Activated T-helper 1 cell treated with anti-CD3 and anti-CD28 coated beads, Interleukin-12 subunit alpha, Interleukin-12 subunit beta, Interleukin-2, Interleukin-4 antibody, amounts not matched to agents 30 ng/mL and 10 ng/mL and 1 ng/mL, durations not matched to agents 14 hours and 24 hours and 36 hours (primary cell): ENCODE measurements at regions of chr1 and their contacts with region 1.

Region 1: DNA sequence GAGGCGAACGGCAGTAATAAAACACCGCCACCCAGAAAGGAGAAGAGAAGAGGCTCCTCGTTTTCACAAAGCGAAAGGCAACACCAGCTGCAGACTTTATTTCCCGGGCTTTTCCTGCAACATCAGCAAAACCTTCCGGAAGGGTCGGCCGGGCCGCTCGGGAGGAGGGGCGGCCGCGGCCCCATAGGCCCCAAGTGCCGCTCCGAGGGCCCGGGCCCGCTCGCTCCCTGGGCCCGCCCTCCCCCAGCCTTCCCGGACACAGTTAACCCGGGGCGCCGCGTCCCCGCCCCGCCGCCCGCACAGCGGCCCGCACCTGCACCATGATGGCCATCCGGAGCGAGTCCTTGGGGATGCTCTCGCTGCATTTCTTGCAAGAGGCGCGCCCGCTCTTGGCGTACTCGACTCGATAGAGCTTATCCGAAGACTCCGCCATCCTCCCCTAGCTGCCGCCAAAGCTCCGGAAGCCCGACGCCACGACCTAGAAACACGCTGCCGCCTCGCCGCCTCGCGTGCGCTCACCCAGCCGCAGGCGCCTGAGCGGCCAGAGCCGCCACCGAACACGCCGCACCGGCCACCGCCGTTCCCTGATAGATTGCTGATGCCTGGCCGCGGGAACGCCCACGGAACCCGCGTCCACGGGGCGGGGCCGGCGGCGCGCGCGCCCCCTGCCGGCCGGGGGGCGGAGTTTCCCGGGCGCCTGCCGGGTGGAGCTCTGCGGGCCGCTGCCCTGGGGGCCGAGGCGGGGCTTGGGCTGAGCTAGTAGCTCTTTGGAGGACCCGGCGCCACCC is at the start of gene PARP1:
- DNase-seq: peak; percentile 90
- H3K4me3 Mint-ChIP-seq: peak within 1 kb of the TSS; percentile 99
- H3K27ac Mint-ChIP-seq: peak within 1 kb of the TSS; percentile 97
- H3K4me1 Mint-ChIP-seq: peaks cover 44% of the 10 kb centered on the region
- H3K27me3 Mint-ChIP-seq: peaks cover 8% of the 10 kb centered on the region
- total RNA-seq, gene PARP1: 209 and 220 TPM in 2 replicates

Region 2: GRCh38 chr1:225428068-225428880 is 979.4 kb before region 1 on chr1:
- intact Hi-C with region 1: loop called (anchors 5 kb)
- DNase-seq: peak; percentile 94
- H3K4me3 Mint-ChIP-seq: peak overlapping the region; percentile 83
- H3K27ac Mint-ChIP-seq: peak overlapping the region; percentile 90
- H3K4me1 Mint-ChIP-seq: peaks cover 56% of the 10 kb centered on the region
- H3K27me3 Mint-ChIP-seq: no peaks in the 10 kb centered on the region

Region 3: DNA sequence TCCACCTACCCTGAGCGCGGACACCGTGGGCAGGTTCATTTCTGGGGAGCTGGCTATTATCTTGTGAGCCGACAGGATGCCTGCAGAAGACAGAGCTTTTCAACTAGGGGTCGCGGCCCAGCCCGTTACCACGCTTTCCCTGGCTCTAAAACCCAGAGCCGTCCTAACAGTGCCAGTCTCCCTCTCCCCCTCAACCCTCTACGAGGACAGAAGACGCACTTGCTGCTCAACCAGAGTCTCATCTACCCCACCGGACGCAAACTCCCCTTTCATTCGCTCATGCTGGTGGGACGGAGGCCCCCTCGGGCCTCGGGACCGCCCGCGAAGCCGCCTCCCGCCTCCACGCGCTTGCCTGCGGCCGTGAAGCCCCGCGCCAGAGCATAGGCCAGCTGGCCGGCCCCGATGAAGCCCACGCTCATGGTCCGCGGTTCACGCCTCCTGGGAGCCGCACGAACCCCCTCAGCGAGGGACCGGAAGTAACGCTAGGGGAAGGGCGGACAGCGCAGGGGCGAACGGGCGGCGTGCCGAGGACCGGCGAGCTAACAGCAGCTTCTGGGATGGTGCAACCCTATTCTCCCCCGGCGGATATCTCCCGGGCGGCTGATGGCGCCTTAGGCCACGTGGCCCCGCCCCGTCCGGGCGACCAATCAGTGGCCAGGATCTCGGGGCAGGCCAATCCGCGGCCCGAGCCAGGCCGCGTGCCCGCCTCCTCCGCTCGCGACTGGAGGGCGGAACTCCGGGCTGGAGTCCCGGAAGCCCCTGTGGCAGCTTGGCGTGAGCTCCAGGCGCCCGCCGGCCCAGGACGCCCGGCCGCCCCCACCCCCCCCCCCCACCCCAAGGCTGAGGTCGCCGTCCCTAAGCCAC is 483.8 kb before region 1 on chr1 and contains the start of gene PYCR2:
- intact Hi-C with region 1: loop called (anchors 5 kb)
- DNase-seq: peak; percentile 95
- H3K4me3 Mint-ChIP-seq: peak within 1 kb of the TSS; percentile 94
- H3K27ac Mint-ChIP-seq: peak within 1 kb of the TSS; percentile 91
- H3K4me1 Mint-ChIP-seq: peaks cover 43% of the 10 kb centered on the region
- H3K27me3 Mint-ChIP-seq: no peaks in the 10 kb centered on the region
- total RNA-seq, gene PYCR2: 137 and 145 TPM in 2 replicates

Region 4: DNA sequence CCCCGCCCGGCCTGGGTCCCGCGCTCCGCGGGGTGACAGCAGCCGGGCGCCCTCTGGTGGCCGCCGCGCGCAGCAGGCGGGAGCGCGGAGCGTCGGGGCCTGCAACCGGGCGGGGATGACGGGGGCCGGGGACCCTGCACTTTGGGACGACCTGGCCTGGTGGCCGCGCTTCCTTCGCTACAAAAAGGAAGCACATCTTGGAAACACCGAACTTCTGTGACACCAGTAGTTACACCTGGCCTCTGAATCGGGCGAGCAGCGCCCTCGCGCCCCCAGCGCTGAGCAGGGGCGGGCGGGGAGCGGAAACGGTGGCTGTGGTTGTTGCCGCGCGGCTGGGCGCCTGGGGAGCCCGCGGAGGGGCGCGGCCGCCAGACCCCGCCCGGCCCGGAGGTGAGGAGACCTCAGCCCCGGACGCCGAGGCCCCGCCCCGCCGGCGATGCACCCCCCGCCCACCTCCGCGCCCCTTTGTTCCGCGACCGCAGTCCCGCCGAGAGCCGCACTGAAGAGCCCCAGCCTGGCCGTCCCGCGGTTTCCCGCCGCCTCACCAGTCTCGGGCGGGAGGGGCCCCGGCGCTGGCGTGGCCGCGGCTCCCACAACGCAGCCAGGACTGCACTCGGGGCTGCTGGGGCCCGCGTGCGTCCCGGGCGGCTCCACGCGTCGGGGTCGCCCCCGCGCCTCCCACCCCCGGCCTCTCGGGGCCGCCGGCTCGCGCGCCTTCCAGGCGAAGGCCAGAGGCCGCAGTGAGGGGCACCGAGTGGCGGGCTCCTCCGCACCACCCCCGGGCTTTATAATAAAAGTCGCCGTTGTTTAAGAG is 285.9 kb before region 1 on chr1:
- intact Hi-C with region 1: loop called (anchors 1 kb)
- DNase-seq: peak; percentile 70
- H3K4me3 Mint-ChIP-seq: peak overlapping the region; percentile 78
- H3K27ac Mint-ChIP-seq: no peak overlapping the region
- H3K4me1 Mint-ChIP-seq: peaks cover 41% of the 10 kb centered on the region
- H3K27me3 Mint-ChIP-seq: peaks cover 5% of the 10 kb centered on the region

Region 5: GRCh38 chr1:226308723-226309315 is 98.9 kb before region 1 on chr1 and contains the start of gene LIN9:
- intact Hi-C with region 1: loop called (anchors 2 kb)
- DNase-seq: peak; percentile 90
- H3K4me3 Mint-ChIP-seq: peak within 1 kb of the TSS; percentile 95
- H3K27ac Mint-ChIP-seq: peak within 1 kb of the TSS; percentile 86
- H3K4me1 Mint-ChIP-seq: peaks cover 50% of the 10 kb centered on the region
- H3K27me3 Mint-ChIP-seq: peaks cover 16% of the 10 kb centered on the region
- total RNA-seq, gene LIN9: 11.7 and 12.1 TPM in 2 replicates

Region 6: DNA sequence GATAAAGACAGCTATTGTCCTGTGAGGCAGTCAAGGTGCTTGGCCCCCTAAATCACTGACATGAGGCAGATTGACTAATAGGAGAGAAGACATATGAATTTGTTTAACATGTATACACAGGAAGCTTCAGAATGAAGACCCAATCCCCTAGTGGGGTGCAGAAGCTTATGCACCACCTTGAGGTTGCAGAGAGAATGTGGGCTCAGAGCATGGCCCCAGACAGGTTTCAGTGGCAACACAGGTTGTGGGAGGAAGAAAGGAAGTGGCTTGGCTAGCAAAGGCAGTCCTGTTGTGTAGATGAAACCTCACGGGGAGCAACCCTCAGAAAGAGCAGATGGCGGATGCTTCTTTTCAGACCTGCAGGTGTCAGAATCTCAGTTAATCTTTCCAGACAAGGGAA is 37.2 kb after region 1 on chr1:
- intact Hi-C with region 1: loop called (anchors 2 kb)
- DNase-seq: peak; percentile 73
- H3K4me3 Mint-ChIP-seq: peak overlapping the region; percentile 8
- H3K27ac Mint-ChIP-seq: peak overlapping the region; percentile 74
- H3K4me1 Mint-ChIP-seq: peaks cover 32% of the 10 kb centered on the region
- H3K27me3 Mint-ChIP-seq: peaks cover 47% of the 10 kb centered on the region

Region 7: DNA sequence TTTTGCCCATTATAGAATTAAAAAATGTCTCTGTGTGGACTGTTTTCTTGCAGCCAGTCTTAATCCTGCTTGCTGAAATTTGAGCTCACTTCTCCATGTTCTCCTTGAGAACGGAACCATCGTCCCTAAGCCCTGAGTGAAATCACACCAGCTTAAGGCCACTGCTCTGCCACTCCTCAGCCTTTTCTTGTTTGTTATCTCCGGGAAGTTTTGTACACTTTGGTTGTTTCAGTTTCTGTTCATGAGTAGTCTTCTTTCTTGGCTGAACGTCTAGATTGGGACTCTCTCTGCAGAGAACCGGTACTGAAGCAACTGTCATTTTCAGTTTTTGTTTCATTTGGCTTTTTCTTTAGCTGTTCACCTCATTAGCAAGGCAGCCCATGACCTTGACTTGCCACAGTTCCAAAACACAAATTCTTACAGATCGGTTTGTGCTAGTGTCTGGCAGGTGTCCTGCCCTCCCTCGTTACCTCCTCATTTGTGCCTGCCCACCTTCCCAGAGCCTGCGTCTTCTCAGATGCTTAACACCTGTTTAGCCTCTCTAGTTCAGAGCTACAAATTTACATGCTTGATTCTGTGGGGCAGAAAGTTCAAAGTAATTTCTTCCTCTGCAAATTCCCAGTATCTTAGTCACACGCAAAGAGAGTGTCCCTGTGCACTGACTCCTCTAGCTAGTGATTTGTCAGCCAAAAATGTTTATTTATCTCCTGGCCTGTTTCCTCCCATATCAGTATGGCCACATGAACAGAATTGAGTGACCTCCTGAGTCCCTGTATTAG is 475.1 kb after region 1 on chr1:
- intact Hi-C with region 1: loop called (anchors 5 kb)
- DNase-seq: peak; percentile 40
- H3K4me3 Mint-ChIP-seq: peak overlapping the region; percentile 48
- H3K27ac Mint-ChIP-seq: peak overlapping the region; percentile 87
- H3K4me1 Mint-ChIP-seq: peaks cover 60% of the 10 kb centered on the region
- H3K27me3 Mint-ChIP-seq: no peaks in the 10 kb centered on the region